Dorsolateral prefrontal cortex (tissue), 120 donors: ENCODE measurements at regions of chr11 and their contacts with region 1.

Region 1: GRCh38 chr11:74634537-74634936 is 42.2 kb downstream of the POLD3 start:
- DNase-seq: peak in 1 of 10 donors; percentile 5
- H3K4me3 ChIP-seq: no peak overlapping the region
- H3K27ac ChIP-seq: no peak overlapping the region
- H3K27me3 ChIP-seq: no peaks in the 10 kb centered on the region
- CTCF ChIP-seq: peak in 42 of 56 donors; percentile 8 to 48 (median 28)

Region 2: DNA sequence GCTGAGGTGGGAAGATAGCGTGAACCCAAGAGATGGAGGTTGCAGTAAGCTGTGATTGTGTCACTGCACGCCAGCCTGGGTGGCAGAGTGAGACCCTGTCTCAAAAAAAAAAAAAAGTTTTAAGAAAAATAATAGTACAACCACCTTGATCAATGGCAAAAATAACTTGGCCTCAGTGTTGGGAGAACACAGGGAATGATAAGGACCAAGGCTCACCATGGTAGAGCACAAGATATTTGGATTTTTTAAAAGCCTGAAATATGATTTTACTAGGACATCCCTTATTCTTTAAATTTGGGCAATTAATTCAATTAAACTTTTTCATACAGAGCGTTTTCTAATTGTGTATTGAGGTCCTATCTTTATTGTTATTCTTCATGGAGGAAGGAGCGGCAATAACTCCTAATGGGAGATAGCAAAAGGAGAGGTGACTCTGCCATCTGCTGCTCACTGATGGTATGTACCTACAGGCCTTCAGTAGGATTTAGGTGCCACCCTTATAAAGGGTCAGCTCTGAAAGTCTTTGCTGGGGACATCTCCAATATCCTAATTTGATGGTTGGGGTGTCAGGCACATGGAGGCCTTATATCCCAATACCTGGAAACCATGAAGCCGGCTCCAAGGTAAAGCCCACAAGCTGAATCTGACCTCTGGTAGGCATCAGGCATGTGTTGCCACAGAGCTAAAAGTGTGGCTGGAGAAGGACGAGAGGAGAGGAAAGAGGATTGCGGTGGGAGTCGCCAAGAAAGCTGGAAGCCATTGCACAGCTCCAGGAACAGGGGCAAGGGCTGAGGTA is 64.1 kb before region 1 on chr11:
- intact Hi-C with region 1: no loop called
- DNase-seq: peak in 2 of 10 donors; percentile 12 to 39
- H3K4me3 ChIP-seq: no peak overlapping the region
- H3K27ac ChIP-seq: no peak overlapping the region
- H3K27me3 ChIP-seq: no peaks in the 10 kb centered on the region
- CTCF ChIP-seq: peak in 54 of 56 donors; percentile 23 to 76 (median 58)

Region 3: GRCh38 chr11:74726547-74727182 is 92.1 kb after region 1 on chr11:
- intact Hi-C with region 1: loop called in 1 of 2 experiments (anchors 5 kb)
- DNase-seq: peak; percentile 54 to 82 (median 72)
- H3K4me3 ChIP-seq: no peak overlapping the region
- H3K27ac ChIP-seq: peak overlapping the region in 18 of 59 donors; percentile 7 to 71 (median 32)
- H3K27me3 ChIP-seq: peaks cover 0 to 11% (median 0%) of the 10 kb centered on the region in 45 donors
- CTCF ChIP-seq: peak; percentile 58 to 98 (median 91)